ENCODE measurements at regions of chr14 and their contacts with region 1.

Region 1: DNA sequence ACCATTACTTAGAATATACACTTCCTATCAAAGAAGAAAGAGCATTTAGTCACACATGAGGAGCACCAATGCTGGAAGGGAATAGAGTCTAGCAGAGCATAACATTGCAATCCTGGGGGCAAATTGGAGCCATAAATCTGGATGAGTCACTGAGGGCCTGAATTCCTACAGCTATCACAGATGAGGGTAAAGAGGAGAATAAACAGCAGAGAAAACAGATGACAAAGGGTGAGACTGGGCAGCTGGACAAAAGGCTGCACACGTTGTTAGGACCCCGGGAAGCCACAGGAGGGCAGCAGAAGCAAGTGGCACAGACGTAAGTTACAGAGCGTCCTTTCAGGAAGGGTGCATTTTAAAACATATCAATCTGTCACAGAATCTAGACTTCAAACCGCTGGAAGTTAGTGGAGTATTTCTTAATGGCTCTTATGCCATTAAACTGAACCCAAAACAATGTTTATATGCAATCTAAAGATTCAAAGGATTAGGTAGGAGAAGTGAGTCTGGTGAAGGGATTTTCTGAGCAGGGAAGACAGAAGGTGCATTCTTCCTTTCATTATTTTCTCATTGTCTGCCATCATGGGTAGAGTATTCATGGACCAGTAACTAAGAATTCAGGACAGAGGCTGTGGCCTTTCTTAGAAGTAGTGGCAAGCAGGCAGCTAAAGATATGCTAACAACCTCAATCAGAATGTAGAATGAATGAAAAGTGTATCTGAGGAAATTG is 159.8 kb upstream of the DAAM1 start:
- DNase-seq: peak; percentile 23 to 62
- H3K4me3 ChIP-seq: no peak overlapping the region
- H3K27ac ChIP-seq: no peak overlapping the region
- H3K4me1 ChIP-seq: peaks cover 0 to 4% (median 2%) of the 10 kb centered on the region in 4 experiments; a peak in 2 of 7 replicates
- H3K27me3 ChIP-seq: no peaks in the 10 kb centered on the region
- CTCF ChIP-seq: peak; percentile 76 to 86 (median 84)
- EP300 ChIP-seq: no peak
- POLR2A ChIP-seq: no peak
- RAD21 ChIP-seq: peak; percentile 84 to 86

Region 2: GRCh38 chr14:58969951-58970751 is 58.5 kb before region 1 on chr14:
- CTCF ChIA-PET with region 1: no interaction called
- POLR2A ChIA-PET with region 1: no interaction called
- DNase-seq: peak; percentile 34 to 54
- H3K4me3 ChIP-seq: peak overlapping the region in 1 of 4 experiments; percentile 37; a peak in 2 of 8 replicates
- H3K27ac ChIP-seq: peak overlapping the region; percentile 73; the same call in 1 of the 2 replicates
- H3K4me1 ChIP-seq: peaks cover 5 to 19% (median 13%) of the 10 kb centered on the region in 4 experiments
- H3K27me3 ChIP-seq: no peaks in the 10 kb centered on the region
- CTCF ChIP-seq: no peak
- EP300 ChIP-seq: peak in 1 of 2 experiments; percentile 78; a peak in 1 of 3 replicates
- POLR2A ChIP-seq: peak in 1 of 2 experiments; percentile 58; a peak in 1 of 3 replicates
- RAD21 ChIP-seq: no peak; a peak in 1 of 4 replicates

Region 3: GRCh38 chr14:58987591-58987990 is 41.0 kb before region 1 on chr14:
- CTCF ChIA-PET with region 1: no interaction called
- POLR2A ChIA-PET with region 1: no interaction called
- DNase-seq: no peak
- H3K4me3 ChIP-seq: no peak overlapping the region
- H3K27ac ChIP-seq: no peak overlapping the region
- H3K4me1 ChIP-seq: no peaks in the 10 kb centered on the region
- H3K27me3 ChIP-seq: no peaks in the 10 kb centered on the region
- CTCF ChIP-seq: no peak
- EP300 ChIP-seq: no peak
- POLR2A ChIP-seq: no peak
- RAD21 ChIP-seq: no peak

Region 4: DNA sequence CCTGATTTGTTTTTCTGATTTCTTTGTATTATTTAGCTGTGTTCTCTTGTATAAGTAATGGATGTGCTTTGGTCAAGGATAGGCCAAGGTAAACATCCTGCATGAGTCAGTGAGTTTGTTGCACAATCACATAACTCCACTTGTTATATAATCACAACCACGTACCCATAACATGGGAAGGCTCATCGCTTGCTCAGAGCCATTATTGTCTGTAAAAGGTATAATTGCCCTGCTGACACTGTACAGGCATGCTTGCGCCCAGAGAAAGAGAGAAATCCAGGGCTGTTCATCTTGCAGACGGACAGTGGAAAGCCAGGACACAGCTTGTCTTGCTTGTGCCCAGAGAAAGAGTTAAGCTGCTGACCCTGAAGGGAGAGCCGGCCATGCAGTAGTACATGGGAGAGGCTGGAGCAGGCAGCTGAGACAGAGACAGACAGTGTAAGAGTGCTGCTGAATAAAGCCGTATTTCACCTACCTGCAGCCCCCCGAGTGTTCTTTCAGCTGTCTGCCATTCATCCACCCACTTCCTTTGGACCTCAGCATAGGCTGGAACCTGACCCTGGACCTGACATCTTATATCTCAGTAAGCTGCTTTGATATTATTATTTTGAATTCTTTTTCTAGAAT is 14.9 kb before region 1 on chr14:
- CTCF ChIA-PET with region 1: interaction called, 13 read pairs
- POLR2A ChIA-PET with region 1: no interaction called
- DNase-seq: no peak
- H3K4me3 ChIP-seq: no peak overlapping the region
- H3K27ac ChIP-seq: no peak overlapping the region
- H3K4me1 ChIP-seq: peaks cover 0 to 6% (median 1%) of the 10 kb centered on the region in 4 experiments; a peak in 1 of 7 replicates
- H3K27me3 ChIP-seq: no peaks in the 10 kb centered on the region
- CTCF ChIP-seq: no peak
- EP300 ChIP-seq: no peak
- POLR2A ChIP-seq: no peak
- RAD21 ChIP-seq: no peak

Region 5: GRCh38 chr14:59126710-59127432 is 98.2 kb after region 1 on chr14:
- CTCF ChIA-PET with region 1: interaction called, 11 read pairs
- POLR2A ChIA-PET with region 1: no interaction called
- DNase-seq: no peak
- H3K4me3 ChIP-seq: no peak overlapping the region
- H3K27ac ChIP-seq: no peak overlapping the region
- H3K4me1 ChIP-seq: no peaks in the 10 kb centered on the region
- H3K27me3 ChIP-seq: no peaks in the 10 kb centered on the region
- CTCF ChIP-seq: peak; percentile 28 to 70 (median 66)
- EP300 ChIP-seq: no peak
- POLR2A ChIP-seq: no peak
- RAD21 ChIP-seq: peak; percentile 94

Measured in H1 (cell line).